MCF 10A (cell line): ENCODE measurements at regions of chr11 and their contacts with region 1.

Region 1: DNA sequence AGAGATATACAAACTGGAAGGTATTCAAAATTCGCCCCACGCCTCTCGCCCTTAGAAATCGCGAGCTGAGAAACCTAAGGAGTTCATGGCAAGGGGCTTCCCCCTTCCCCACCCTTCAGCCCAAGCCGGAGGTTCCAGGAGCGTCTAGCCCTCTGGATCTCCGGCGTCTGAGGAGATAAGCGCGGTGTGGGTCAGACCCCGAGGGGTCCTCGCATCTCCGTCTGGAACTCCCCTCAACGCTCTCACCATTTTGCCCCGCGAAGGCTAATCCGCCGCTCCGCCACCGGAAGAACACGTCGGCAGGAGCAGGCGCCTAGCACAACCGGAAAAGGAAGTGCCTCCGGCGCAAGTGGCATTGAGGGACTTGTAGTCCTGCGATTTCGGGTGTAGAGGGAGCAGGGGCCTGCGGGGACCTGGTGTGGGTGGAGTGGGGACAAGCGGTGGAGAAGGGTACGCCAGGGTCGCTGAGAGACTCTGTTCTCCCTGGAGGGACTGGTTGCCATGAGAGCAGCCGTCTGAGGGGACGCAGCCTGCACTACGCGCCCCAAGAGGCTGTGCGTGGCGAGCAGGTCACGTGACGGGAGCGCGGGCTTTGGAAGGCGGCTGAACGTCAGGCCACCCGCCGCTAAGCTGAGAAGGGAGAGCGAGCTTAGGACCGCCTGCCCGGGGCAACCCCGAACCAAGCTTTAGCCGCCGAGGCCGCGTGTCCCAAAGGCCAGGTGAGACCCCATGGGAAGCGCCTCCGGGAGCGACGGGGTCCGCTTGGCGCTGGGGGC is at the starts of genes FEN1 and TMEM258:
- DNase-seq: peak; percentile 95
- H3K4me3 Mint-ChIP-seq: peak within 1 kb of the TSS; percentile 81
- H3K27ac Mint-ChIP-seq: peak within 1 kb of the TSS; percentile 98
- H3K4me1 Mint-ChIP-seq: peaks cover 11% of the 10 kb centered on the region
- H3K27me3 Mint-ChIP-seq: no peaks in the 10 kb centered on the region
- CTCF ChIP-seq: no peak
- total RNA-seq, gene FEN1: 19.9 and 21.5 TPM in 2 replicates
- total RNA-seq, gene TMEM258: 184 and 300 TPM in 2 replicates

Region 2: GRCh38 chr11:61816736-61817455 is 24.4 kb after region 1 on chr11 and contains the start of gene FADS1:
- CTCF ChIA-PET with region 1: interaction called, 33 read pairs
- POLR2A ChIA-PET with region 1: interaction called, 26 read pairs
- intact Hi-C with region 1: no loop called
- DNase-seq: peak; percentile 85
- H3K4me3 Mint-ChIP-seq: peak within 1 kb of the TSS; percentile 93
- H3K27ac Mint-ChIP-seq: peak within 1 kb of the TSS; percentile 93
- H3K4me1 Mint-ChIP-seq: peaks cover 34% of the 10 kb centered on the region
- H3K27me3 Mint-ChIP-seq: no peaks in the 10 kb centered on the region
- CTCF ChIP-seq: peak; percentile 50
- total RNA-seq, gene FADS1: 24.2 and 27.5 TPM in 2 replicates

Region 3: GRCh38 chr11:61891331-61892084 is 99.0 kb after region 1 on chr11 and contains the start of gene FADS3:
- CTCF ChIA-PET with region 1: interaction called, 148 read pairs
- POLR2A ChIA-PET with region 1: interaction called, 8 read pairs
- intact Hi-C with region 1: loop called (anchors 1 kb)
- DNase-seq: peak; percentile 77
- H3K4me3 Mint-ChIP-seq: peak within 1 kb of the TSS; percentile 83
- H3K27ac Mint-ChIP-seq: peak within 1 kb of the TSS; percentile 61
- H3K4me1 Mint-ChIP-seq: peaks cover 23% of the 10 kb centered on the region
- H3K27me3 Mint-ChIP-seq: no peaks in the 10 kb centered on the region
- CTCF ChIP-seq: no peak
- total RNA-seq, gene FADS3: 145 and 184 TPM in 2 replicates

Region 4: DNA sequence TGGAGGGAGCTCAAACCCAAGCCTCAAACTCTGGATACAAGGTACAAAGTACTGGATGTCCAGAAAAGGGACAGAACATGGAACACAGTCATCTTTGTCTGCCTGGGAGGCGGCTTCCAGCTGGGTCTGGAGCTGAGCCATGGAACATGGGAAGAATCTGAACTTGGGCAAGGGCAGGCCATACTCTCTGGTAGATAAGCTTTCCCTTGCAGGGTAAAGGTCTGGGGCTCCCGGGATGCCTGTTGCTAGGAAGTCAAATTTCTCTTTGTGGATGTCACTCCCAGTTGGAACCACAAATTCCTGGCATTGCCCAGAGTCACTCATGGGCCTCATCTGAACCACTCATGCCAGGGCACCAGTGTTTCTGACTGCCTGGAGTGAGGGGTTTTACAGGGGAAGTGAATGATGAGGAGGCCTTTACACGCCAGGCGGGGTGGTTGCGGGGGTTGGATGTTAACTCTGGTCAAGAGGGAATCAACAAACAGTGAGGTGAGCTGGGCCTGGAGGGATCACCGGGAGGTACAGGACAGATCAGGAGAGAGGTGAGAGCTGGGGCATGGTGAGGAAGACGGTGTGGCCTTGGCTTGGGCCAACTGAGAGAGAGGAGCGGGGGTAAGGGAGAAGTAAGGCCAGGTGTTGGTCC is 169.2 kb after region 1 on chr11:
- CTCF ChIA-PET with region 1: interaction called, 10 read pairs
- POLR2A ChIA-PET with region 1: interaction called, 15 read pairs
- intact Hi-C with region 1: no loop called
- DNase-seq: peak; percentile 57
- H3K4me3 Mint-ChIP-seq: no peak overlapping the region
- H3K27ac Mint-ChIP-seq: peak overlapping the region; percentile 70
- H3K4me1 Mint-ChIP-seq: peaks cover 45% of the 10 kb centered on the region
- H3K27me3 Mint-ChIP-seq: no peaks in the 10 kb centered on the region
- CTCF ChIP-seq: no peak

Region 5: GRCh38 chr11:62054484-62055121 is 262.1 kb after region 1 on chr11:
- CTCF ChIA-PET with region 1: interaction called, 44 read pairs
- POLR2A ChIA-PET with region 1: no interaction called
- intact Hi-C with region 1: loop called (anchors 1 kb)
- DNase-seq: peak; percentile 93
- H3K4me3 Mint-ChIP-seq: peak overlapping the region; percentile 26
- H3K27ac Mint-ChIP-seq: peak overlapping the region; percentile 75
- H3K4me1 Mint-ChIP-seq: peaks cover 18% of the 10 kb centered on the region
- H3K27me3 Mint-ChIP-seq: no peaks in the 10 kb centered on the region
- CTCF ChIP-seq: peak; percentile 81

Region 6: GRCh38 chr11:62088331-62088933 is 295.9 kb after region 1 on chr11:
- CTCF ChIA-PET with region 1: interaction called, 63 read pairs
- POLR2A ChIA-PET with region 1: no interaction called
- intact Hi-C with region 1: no loop called
- DNase-seq: peak; percentile 27
- H3K4me3 Mint-ChIP-seq: no peak overlapping the region
- H3K27ac Mint-ChIP-seq: no peak overlapping the region
- H3K4me1 Mint-ChIP-seq: no peaks in the 10 kb centered on the region
- H3K27me3 Mint-ChIP-seq: no peaks in the 10 kb centered on the region
- CTCF ChIP-seq: no peak